ENCODE measurements at regions of chr22 and their contacts with region 1.

Region 1: DNA sequence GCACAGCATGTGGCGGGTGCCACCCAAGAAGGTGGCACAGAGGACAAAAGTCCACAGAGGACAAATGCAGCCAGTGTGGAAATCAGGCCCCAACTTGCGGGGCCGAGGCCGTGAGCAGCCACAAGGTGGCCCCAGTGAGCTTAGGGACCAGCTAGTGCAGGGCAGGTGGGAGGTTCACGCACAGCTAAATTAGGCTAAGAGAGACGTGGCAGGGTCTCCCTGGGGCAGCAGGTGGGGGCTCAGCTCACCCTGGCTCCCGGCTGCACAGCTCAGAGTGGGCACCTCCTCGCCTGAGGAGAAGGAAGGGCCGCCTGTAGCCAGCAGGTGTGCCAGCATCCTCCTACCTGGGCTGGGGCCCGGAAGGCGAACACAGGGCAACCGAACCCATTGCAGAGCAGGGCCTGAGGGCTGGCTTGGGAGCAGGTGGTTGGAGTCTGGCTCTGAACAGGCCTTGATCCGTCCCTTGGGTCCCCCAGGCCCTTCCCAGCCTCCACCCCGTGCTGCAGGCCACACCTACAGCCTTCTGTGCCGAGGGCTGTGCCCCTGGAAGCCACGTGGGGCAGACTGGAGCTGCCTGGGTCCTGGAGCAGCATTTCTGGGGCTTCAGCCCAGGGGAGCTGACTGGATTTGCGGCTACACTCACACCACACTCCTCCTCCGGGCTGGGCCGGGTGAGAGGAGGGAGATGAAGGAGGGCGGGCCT is 26.1 kb upstream of the CELSR1 start:
- DNase-seq: peak; percentile 81
- ATAC-seq: peak; percentile 90
- H3K4me3 Mint-ChIP-seq: no peak overlapping the region
- H3K27ac Mint-ChIP-seq: no peak overlapping the region
- H3K4me1 Mint-ChIP-seq: peaks cover 5% of the 10 kb centered on the region
- H3K27me3 Mint-ChIP-seq: no peaks in the 10 kb centered on the region

Region 2: GRCh38 chr22:46367707-46368191 is 195.8 kb before region 1 on chr22:
- CTCF ChIA-PET with region 1: interaction called, 10 read pairs
- DNase-seq: peak; percentile 78
- ATAC-seq: peak; percentile 78
- H3K4me3 Mint-ChIP-seq: no peak overlapping the region
- H3K27ac Mint-ChIP-seq: no peak overlapping the region
- H3K4me1 Mint-ChIP-seq: peaks cover 10% of the 10 kb centered on the region
- H3K27me3 Mint-ChIP-seq: no peaks in the 10 kb centered on the region

Region 3: DNA sequence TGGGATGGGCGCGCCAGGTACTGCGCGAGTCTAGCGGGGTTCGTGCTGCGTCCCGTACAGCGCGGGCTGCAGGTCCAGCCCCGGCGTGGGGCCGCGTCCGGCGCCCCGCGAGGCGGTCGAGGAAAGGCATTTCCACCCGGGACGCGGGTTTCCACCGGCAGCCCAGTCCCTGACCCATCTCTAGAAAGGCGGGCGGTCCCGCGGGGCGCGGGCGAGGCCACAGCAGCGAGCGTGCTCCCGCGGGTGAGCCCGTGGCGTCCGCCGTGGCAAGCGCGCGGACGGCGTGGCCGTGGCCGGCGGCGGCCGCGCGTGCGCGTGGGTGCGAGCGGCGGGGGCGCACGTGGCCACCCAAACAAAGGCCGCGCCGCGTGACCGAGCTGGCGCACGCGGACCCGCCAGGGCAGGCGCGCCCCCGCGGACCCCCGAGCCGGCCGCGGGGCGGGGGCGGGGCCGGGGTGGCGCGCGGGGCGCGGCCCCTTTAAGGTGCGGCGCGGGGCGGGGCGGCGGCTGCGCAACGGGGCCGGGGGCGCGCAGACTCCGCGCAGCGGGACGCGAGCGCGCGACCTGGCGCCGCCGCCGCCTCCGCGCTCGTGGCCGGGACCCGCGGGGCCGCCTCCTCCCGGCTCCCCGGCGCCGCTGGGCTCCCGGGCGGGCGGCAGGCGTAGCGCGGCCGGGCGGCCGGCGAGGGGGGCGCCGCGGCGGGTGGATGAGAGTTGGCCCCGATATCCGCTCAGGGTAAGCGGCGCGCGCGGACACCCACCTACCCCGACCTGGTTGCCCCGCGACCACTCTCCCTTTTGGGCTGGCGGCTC is 13.2 kb after region 1 on chr22:
- CTCF ChIA-PET with region 1: interaction called, 12 read pairs
- DNase-seq: no peak
- ATAC-seq: peak; percentile 81
- H3K4me3 Mint-ChIP-seq: peak overlapping the region; percentile 64
- H3K27ac Mint-ChIP-seq: peak overlapping the region; percentile 27
- H3K4me1 Mint-ChIP-seq: peaks cover 34% of the 10 kb centered on the region
- H3K27me3 Mint-ChIP-seq: peaks cover 2% of the 10 kb centered on the region

Region 4: DNA sequence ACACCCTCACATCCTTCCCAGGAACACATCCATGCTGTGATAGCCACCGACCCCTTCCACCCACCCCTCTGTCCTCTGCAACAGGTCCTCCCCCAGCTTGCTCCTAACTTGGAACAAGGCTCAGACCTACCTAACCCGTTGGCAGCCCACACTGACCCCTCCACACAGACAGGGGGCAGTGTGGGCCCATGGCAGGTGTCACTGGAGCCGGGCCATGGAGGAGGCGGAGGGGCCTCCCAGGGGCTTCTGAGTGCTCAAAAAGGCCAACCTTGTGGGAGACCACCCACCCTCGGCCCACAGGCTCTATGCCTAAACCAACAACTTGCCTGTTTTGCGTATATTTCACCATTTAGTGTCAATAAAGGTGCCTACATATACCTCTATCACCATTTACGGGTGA is 117.5 kb after region 1 on chr22:
- CTCF ChIA-PET with region 1: interaction called, 15 read pairs
- DNase-seq: no peak
- ATAC-seq: peak; percentile 29
- H3K4me3 Mint-ChIP-seq: no peak overlapping the region
- H3K27ac Mint-ChIP-seq: no peak overlapping the region
- H3K4me1 Mint-ChIP-seq: peaks cover 8% of the 10 kb centered on the region
- H3K27me3 Mint-ChIP-seq: no peaks in the 10 kb centered on the region

Region 5: GRCh38 chr22:46798366-46799350 is 235.1 kb after region 1 on chr22:
- CTCF ChIA-PET with region 1: interaction called, 21 read pairs
- DNase-seq: peak; percentile 80
- ATAC-seq: peak; percentile 88
- H3K4me3 Mint-ChIP-seq: no peak overlapping the region
- H3K27ac Mint-ChIP-seq: peak overlapping the region; percentile 54
- H3K4me1 Mint-ChIP-seq: peaks cover 7% of the 10 kb centered on the region
- H3K27me3 Mint-ChIP-seq: no peaks in the 10 kb centered on the region

Measured in activated CD8-positive, alpha-beta memory T cell treated with anti-CD3 and anti-CD28 coated beads, Interleukin-2, amount 10 ng/mL, durations not matched to agents 7 days and 5 days (primary cell).